Colonic mucosa (tissue), 4 donors: ENCODE measurements at regions of chr13 and their contacts with region 1.

Region 1: GRCh38 chr13:40664100-40664998 is 2.1 kb downstream of the FOXO1 start:
- DNase-seq: peak; percentile 87
- H3K4me3 ChIP-seq: peak overlapping the region; percentile 76
- H3K27ac ChIP-seq: peak overlapping the region; percentile 95
- H3K4me1 ChIP-seq: peaks cover 12% of the 10 kb centered on the region
- H3K27me3 ChIP-seq: no peaks in the 10 kb centered on the region
- CTCF ChIP-seq: no peak

Region 2: DNA sequence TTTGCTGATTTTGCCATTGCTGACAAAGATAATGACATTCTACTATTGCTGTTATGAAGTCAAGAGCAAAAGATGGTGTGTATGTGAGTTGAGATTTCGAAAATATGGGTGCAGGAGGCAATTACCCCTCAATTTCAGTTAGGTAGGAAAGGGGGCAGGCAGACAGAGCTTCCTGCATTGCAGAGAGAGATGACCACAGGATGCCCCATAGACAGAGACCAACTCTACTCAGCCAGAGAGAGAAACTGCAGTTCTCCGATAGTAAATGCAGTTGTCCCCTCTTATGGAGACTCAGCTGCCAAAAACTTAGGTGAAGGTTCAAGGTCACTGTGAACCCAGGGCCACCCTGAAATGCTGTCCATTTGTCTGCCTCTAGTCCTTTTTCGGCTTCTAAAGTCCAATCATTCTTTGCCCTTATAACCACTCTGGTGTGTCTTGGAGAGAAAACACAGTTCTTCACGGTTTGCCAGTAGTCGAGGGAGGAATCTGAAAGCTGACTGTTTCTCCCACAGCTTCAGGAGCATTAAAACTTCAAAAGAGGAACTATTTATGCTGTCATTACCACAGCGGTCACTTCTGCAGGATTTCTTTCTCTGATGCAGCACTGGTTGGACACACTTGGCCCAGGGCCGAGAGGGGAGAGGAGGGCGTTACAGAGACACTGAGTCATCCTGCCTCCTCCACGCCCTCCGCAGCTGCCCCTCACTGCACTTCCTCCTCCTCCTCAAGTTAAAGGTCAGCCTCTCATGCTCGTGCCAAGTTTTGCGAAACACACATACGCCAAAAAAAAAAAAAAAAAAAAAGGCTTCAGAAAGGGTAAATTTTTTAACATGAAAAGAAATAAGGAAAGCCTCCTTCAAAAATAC is 262.2 kb before region 1 on chr13:
- intact Hi-C with region 1: loop called (anchors 5 kb)
- DNase-seq: peak; percentile 97
- H3K4me3 ChIP-seq: no peak overlapping the region
- H3K27ac ChIP-seq: peak overlapping the region; percentile 65
- H3K4me1 ChIP-seq: peaks cover 18% of the 10 kb centered on the region
- H3K27me3 ChIP-seq: no peaks in the 10 kb centered on the region
- CTCF ChIP-seq: no peak

Region 3: GRCh38 chr13:40895227-40896184 is 231.2 kb after region 1 on chr13:
- intact Hi-C with region 1: no loop called
- DNase-seq: peak; percentile 53
- H3K4me3 ChIP-seq: no peak overlapping the region
- H3K27ac ChIP-seq: peak overlapping the region; percentile 62
- H3K4me1 ChIP-seq: no peaks in the 10 kb centered on the region
- H3K27me3 ChIP-seq: no peaks in the 10 kb centered on the region
- CTCF ChIP-seq: no peak